ENCODE measurements at regions of chr9 and their contacts with region 1.

Region 1: DNA sequence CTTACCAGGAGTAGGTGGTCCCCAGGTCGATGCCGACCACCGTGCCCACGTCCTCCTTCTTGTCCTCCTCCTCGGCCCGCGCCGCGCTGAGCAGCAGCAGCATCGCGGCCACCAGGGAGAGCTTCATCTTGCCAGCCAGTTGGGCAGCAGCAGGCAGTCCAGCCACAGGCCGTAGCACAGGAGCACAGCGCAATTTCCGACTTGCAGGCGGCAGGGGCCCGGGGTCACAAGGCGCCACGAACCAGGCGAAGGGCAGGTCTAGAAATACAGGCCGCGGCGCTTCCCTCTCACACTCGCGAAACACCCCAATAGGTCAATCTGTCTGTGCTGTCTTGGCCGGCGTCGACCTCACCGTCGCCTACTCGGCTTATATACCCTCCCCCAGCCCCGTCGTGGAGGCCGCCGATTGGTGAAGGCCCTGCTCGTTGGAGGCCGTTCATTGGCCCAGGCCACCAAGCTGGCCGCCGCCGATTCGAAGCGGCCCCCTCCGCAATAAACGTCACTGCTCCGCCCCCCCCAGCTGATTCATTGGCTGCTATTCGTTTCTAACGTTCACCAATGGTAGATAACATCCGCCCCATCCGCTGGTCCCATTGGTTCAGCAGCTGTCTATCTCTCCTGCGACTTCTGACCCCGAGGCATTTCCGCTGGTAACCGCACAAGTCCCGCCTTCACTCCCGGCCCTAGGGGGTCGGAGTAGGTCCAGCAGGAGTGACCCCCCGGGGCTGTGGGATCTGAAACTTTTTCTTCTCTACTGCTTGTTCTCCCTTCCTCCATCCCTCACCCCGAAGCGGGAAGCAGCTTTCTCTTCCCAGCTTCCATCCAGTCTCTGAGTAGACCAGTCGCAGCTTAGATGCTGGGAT is at the start of gene HSPA5:
- DNase-seq: peak; percentile 99
- H3K4me3 ChIP-seq: peak within 1 kb of the TSS; percentile 96
- H3K27ac ChIP-seq: peak within 1 kb of the TSS; percentile 61
- H3K4me1 ChIP-seq: peaks cover 40% of the 10 kb centered on the region
- CTCF ChIP-seq: no peak
- total RNA-seq, gene HSPA5: 49.0 and 52.1 TPM in 2 replicates

Region 2: DNA sequence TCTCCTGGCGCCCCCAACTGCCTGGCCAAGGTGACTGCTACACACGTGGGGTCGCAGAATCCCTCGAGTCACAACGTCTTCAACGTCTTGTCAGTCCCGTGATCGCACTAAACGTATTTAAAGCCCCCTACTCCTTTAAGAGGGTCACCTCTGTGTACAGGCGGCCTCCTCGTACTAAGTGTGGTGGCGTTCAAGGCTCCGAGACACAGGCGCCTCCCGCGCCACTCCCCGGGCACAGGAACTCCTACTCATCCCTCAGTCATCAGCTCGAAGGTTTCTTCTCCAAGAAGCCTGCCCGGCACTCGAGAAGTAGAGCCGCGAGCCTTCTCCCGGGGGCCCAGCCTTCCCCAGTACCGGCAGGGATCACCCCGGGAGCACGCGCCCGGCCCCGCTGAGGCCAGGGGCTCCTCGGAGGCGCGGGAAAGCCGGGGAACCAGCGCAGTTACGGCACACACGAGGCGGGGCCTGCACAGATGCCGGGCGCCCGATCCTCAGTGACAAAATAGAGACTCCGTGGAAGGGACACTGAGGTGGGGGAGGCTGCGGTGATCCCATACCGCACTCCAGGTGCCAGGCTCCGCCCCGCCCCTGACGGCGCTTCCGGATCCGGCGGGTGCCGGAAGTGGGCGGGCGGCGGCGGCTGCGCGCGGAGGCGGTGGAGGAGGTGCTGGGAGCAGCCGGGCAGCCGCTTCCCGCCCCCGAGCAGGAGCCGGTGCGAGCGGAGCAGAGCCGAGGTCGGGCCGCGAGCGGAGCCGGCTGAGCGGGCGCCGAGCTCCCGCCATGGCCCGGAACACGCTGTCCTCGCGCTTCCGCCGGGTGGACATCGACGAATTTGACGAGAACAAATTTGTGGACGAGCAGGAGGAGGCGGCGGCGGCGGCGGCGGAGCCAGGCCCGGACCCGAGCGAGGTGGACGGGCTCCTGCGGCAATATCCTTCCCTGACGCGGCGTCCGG is 372.4 kb before region 1 on chr9:
- CTCF ChIA-PET with region 1: no interaction called
- POLR2A ChIA-PET with region 1: no interaction called
- intact Hi-C with region 1: loop called (anchors 5 kb)
- DNase-seq: peak; percentile 89
- H3K4me3 ChIP-seq: peak overlapping the region; percentile 79
- H3K27ac ChIP-seq: peak overlapping the region; percentile 88
- H3K4me1 ChIP-seq: peaks cover 53% of the 10 kb centered on the region
- CTCF ChIP-seq: peak; percentile 77

Region 3: GRCh38 chr9:125189361-125190289 is 51.6 kb before region 1 on chr9 and contains the start of gene PPP6C:
- CTCF ChIA-PET with region 1: no interaction called
- POLR2A ChIA-PET with region 1: interaction called, 12 read pairs
- intact Hi-C with region 1: loop called (anchors 1 kb)
- DNase-seq: peak; percentile 95
- H3K4me3 ChIP-seq: peak within 1 kb of the TSS; percentile 96
- H3K27ac ChIP-seq: peak within 1 kb of the TSS; percentile 74
- H3K4me1 ChIP-seq: peaks cover 48% of the 10 kb centered on the region
- CTCF ChIP-seq: peak; percentile 76
- total RNA-seq, gene PPP6C: 18.9 and 21.4 TPM in 2 replicates

Region 4: DNA sequence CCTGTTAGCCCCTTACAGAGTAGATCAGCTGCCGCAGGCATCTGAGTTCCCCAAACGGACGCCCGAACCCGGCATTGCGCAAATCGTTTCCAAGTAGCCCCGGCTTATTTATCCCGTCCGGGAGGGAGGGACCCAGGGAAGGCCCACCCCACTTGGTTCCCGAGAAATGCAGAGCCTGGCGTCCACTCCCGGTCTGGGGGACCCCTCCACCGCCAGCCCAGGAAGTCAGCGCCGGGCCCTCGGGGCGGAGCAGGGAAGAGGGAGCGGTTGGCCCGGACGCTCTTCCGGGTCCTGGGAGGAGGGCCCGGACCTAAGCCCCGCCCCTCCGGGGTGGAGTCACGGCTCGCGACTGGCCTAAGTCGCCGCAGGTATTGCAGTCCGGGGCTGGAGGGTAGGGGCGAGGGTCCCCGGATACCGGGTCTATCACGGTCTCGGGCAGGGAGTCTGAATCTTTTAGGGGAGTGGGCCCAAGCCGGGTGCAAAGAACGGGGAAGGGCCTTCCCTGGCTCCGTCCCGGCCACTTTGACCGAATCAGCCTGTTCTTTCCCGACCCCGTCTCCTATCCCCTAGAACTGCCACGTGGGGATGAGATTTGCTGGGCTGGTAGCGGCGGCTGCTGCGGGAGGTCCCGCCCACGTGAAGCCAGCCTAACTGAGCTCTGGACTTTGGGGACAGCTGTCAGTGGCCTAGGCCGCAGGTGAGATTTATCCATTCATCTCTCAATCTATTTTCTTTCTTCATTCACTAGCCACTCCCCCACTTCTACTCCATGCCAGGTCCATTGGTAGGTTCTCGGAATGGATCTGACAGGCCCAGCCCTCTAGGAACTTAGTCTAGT is 40.8 kb before region 1 on chr9 and contains the start of gene RABEPK:
- CTCF ChIA-PET with region 1: no interaction called
- POLR2A ChIA-PET with region 1: interaction called, 15 read pairs
- intact Hi-C with region 1: no loop called
- DNase-seq: peak; percentile 93
- H3K4me3 ChIP-seq: peak within 1 kb of the TSS; percentile 98
- H3K27ac ChIP-seq: peak within 1 kb of the TSS; percentile 81
- H3K4me1 ChIP-seq: peaks cover 26% of the 10 kb centered on the region
- CTCF ChIP-seq: no peak; the same call in 1 of the 2 replicates
- total RNA-seq, gene RABEPK: 16.2 and 27.0 TPM in 2 replicates

Region 5: GRCh38 chr9:125255781-125256391 is 14.7 kb after region 1 on chr9:
- CTCF ChIA-PET with region 1: no interaction called
- POLR2A ChIA-PET with region 1: interaction called, 28 read pairs
- intact Hi-C with region 1: no loop called
- DNase-seq: peak; percentile 32
- H3K4me3 ChIP-seq: no peak overlapping the region
- H3K27ac ChIP-seq: no peak overlapping the region
- H3K4me1 ChIP-seq: peaks cover under 1% of the 10 kb centered on the region
- CTCF ChIP-seq: peak; percentile 74

Region 6: DNA sequence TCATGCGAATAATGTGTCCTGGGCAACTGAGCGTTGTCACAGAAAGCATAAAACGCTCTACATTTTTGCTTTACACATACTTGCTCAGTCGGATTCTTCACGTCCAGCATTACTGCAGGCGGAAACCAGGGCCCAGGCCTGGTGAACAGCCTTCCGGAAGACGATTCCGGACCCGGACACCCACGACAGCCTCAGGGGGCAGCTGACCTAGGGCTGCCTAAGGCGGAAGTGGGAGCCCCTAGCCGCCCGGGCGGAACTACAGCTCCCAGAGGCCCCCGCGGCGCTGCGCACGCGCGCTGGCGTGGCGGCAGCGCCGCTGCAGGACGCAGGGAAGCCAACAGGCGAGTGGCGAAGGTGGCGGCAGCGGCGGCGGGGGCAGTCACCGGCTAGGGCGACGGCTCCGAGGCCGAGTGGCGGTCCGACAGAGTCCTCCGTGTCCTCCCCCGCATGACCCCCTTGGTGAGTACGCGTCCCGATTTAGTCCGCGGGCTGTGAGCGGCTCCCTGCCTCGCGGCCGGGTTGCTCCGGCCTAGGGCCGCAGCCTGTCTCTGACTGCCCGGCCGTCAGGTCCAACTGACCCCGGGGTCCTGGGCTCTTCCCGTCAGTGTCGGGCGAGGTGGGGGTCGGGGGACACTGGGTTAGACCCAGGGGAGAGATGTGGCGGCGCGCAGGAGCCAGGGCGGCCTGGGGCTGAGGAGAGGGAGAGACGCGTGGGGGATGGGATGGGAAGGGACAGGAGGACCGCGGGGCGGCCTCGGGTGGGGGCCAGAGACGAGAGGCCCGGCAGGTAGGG is 20.5 kb after region 1 on chr9 and contains the start of gene GAPVD1:
- CTCF ChIA-PET with region 1: no interaction called
- POLR2A ChIA-PET with region 1: interaction called, 28 read pairs
- intact Hi-C with region 1: no loop called
- DNase-seq: peak; percentile 97
- H3K4me3 ChIP-seq: peak within 1 kb of the TSS; percentile 95
- H3K27ac ChIP-seq: peak within 1 kb of the TSS; percentile 47
- H3K4me1 ChIP-seq: peaks cover 28% of the 10 kb centered on the region
- CTCF ChIP-seq: peak; percentile 57
- total RNA-seq, gene GAPVD1: 29.6 and 36.0 TPM in 2 replicates

Region 7: DNA sequence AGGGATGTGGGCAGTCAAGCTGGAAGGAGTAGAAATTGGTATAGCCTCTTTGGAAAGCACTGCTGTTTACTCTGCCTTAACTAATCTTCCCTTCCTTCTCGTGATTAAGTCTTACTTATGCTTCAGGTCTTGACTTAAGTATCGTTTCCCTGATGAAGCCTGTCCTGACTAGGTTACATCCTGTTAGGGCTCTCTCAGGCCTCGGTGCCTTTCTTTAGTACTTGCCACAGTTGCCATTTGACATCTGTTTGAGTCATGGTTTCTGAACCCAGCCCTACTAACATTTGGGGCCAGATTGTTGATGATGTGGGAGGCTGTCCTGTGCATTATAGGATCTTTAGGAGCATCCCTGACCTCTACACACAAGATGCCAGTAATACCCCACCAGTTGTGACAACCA is 114.8 kb after region 1 on chr9:
- CTCF ChIA-PET with region 1: no interaction called
- POLR2A ChIA-PET with region 1: no interaction called
- intact Hi-C with region 1: no loop called
- DNase-seq: no peak
- H3K4me3 ChIP-seq: no peak overlapping the region
- H3K27ac ChIP-seq: no peak overlapping the region
- H3K4me1 ChIP-seq: no peaks in the 10 kb centered on the region
- CTCF ChIP-seq: no peak

Region 8: GRCh38 chr9:125374443-125375309 is 133.4 kb after region 1 on chr9:
- CTCF ChIA-PET with region 1: interaction called, 3 read pairs
- POLR2A ChIA-PET with region 1: no interaction called
- intact Hi-C with region 1: loop called (anchors 5 kb)
- DNase-seq: peak; percentile 87
- H3K4me3 ChIP-seq: peak overlapping the region; percentile 13
- H3K27ac ChIP-seq: no peak overlapping the region
- H3K4me1 ChIP-seq: peaks cover 7% of the 10 kb centered on the region
- CTCF ChIP-seq: peak; percentile 89

Measured in OCI-LY7 (cell line).